Mammary epithelial cell (primary cell): ENCODE measurements at regions of chr17 and their contacts with region 1.

Region 1: GRCh38 chr17:60142872-60143499 is 6.8 kb upstream of the CA4 start:
- DNase-seq: peak; percentile 77
- H3K4me3 ChIP-seq: peak overlapping the region in 1 of 3 experiments; percentile 5
- H3K27ac ChIP-seq: peak overlapping the region; percentile 31
- H3K4me1 ChIP-seq: peaks cover 27% of the 10 kb centered on the region
- H3K27me3 ChIP-seq: peaks cover 13% of the 10 kb centered on the region
- CTCF ChIP-seq: peak; percentile 85 to 86

Region 2: DNA sequence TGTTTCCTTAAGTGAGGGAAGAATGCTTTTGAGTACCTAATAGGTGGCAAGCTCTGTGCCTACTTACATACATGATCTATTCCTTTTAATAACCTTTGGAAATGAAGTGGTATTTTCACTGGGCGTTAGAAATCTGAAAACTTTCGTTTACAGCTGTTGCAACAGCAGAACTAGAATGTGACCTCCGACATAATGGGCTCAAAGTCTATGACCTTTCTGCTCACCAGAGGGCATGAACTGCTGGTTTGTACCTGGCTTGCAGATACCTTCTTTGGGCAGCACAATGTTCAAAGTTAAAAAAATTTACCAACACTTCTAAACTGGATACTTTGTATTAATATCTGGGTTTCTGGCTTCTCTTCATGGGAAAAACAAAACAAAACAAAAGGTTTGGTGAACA is 31.0 kb after region 1 on chr17:
- CTCF ChIA-PET with region 1: no interaction called
- dilution Hi-C with region 1: no loop called
- in situ Hi-C with region 1: no loop called
- intact Hi-C with region 1: loop called (anchors 2 kb)
- DNase-seq: no peak
- H3K4me3 ChIP-seq: no peak overlapping the region
- H3K27ac ChIP-seq: no peak overlapping the region
- H3K4me1 ChIP-seq: no peaks in the 10 kb centered on the region
- H3K27me3 ChIP-seq: no peaks in the 10 kb centered on the region
- CTCF ChIP-seq: no peak

Region 3: GRCh38 chr17:60421273-60421934 is 278.4 kb after region 1 on chr17:
- CTCF ChIA-PET with region 1: interaction called, 8 read pairs
- dilution Hi-C with region 1: loop called (anchors 10 kb)
- in situ Hi-C with region 1: loop called (anchors 25 kb)
- intact Hi-C with region 1: no loop called
- DNase-seq: peak; percentile 26
- H3K4me3 ChIP-seq: peak overlapping the region; percentile 29 to 45 (median 35)
- H3K27ac ChIP-seq: no peak overlapping the region
- H3K4me1 ChIP-seq: peaks cover 9% of the 10 kb centered on the region
- H3K27me3 ChIP-seq: no peaks in the 10 kb centered on the region
- CTCF ChIP-seq: peak; percentile 35 to 74

Region 4: DNA sequence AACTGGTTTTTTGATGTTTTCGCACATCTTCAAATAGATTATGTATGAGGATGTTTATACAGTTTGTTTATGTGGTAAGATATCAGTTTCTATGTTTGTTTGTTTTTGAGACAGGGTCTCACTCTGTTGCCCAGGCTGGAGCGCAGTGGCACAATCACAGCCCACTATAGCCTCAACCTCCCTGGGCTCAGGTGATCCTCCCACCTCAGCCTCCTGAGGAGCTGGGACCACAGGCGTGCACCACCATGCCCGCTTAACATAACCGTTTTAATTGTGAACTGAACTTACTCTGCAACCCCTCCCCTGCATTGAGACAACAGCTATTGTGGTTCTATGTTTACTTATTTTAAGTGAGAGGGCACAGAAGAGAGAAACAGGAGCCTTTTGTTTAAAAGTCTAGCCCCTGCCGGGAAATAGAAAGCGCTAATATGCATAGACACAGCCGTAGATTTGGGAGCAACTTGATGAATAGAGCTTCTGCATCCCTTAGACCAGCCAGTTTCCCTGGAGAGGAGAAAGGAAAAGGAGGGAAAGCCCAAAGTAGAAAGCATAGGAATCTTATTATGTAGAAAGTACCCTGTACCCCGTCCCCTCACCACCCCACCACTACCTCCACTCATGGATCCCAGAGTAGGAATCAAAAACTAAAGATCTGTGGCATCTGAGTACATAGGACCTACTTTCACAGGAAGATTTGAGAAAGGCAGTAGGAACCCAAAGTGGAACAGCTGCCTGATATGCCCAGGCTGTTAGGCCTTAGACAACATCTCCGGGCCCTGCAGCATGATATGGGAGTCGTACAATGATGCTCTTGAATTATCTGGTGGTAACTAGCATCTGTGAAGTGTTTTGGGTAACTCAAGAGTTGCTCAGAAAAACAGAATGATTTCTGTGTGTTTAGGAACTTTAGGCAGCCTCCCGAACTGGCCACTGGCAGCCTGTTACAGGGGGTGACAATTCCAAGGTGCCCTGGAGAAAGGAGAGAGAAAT is 402.8 kb after region 1 on chr17:
- CTCF ChIA-PET with region 1: no interaction called
- dilution Hi-C with region 1: no loop called
- in situ Hi-C with region 1: no loop called
- intact Hi-C with region 1: no loop called
- DNase-seq: no peak
- H3K4me3 ChIP-seq: no peak overlapping the region
- H3K27ac ChIP-seq: no peak overlapping the region
- H3K4me1 ChIP-seq: no peaks in the 10 kb centered on the region
- H3K27me3 ChIP-seq: no peaks in the 10 kb centered on the region
- CTCF ChIP-seq: no peak

Region 5: GRCh38 chr17:60630352-60630751 is 487.4 kb after region 1 on chr17:
- CTCF ChIA-PET with region 1: no interaction called
- dilution Hi-C with region 1: no loop called
- in situ Hi-C with region 1: no loop called
- intact Hi-C with region 1: loop called (anchors 10 kb)
- DNase-seq: no peak
- H3K4me3 ChIP-seq: no peak overlapping the region
- H3K27ac ChIP-seq: no peak overlapping the region
- H3K4me1 ChIP-seq: no peaks in the 10 kb centered on the region
- H3K27me3 ChIP-seq: no peaks in the 10 kb centered on the region
- CTCF ChIP-seq: no peak